ENCODE measurements at regions of chr2 and their contacts with region 1.

Region 1: GRCh38 chr2:74587664-74588277 is 33.3 kb downstream of the DOK1 start:
- DNase-seq: peak; percentile 77 to 88 (median 84)
- H3K4me3 ChIP-seq: no peak overlapping the region
- H3K27ac ChIP-seq: no peak overlapping the region
- H3K4me1 ChIP-seq: peaks cover 17 to 48% (median 26%) of the 10 kb centered on the region in 4 experiments
- H3K27me3 ChIP-seq: no peaks in the 10 kb centered on the region

Region 2: GRCh38 chr2:73588177-73588576 is 999.6 kb before region 1 on chr2:
- CTCF ChIA-PET with region 1: no interaction called
- POLR2A ChIA-PET with region 1: no interaction called
- DNase-seq: no peak
- H3K4me3 ChIP-seq: no peak overlapping the region
- H3K27ac ChIP-seq: no peak overlapping the region
- H3K4me1 ChIP-seq: no peaks in the 10 kb centered on the region
- H3K27me3 ChIP-seq: no peaks in the 10 kb centered on the region

Region 3: GRCh38 chr2:73984203-73984921 is 603.4 kb before region 1 on chr2 and contains the start of gene TET3:
- CTCF ChIA-PET with region 1: no interaction called
- POLR2A ChIA-PET with region 1: no interaction called
- DNase-seq: no peak
- H3K4me3 ChIP-seq: peak within 1 kb of the TSS; percentile 36 to 80 (median 73)
- H3K27ac ChIP-seq: peak within 1 kb of the TSS in 1 of 2 experiments; percentile 74
- H3K4me1 ChIP-seq: peaks cover 27 to 84% (median 69%) of the 10 kb centered on the region in 4 experiments
- H3K27me3 ChIP-seq: no peaks in the 10 kb centered on the region

Region 4: DNA sequence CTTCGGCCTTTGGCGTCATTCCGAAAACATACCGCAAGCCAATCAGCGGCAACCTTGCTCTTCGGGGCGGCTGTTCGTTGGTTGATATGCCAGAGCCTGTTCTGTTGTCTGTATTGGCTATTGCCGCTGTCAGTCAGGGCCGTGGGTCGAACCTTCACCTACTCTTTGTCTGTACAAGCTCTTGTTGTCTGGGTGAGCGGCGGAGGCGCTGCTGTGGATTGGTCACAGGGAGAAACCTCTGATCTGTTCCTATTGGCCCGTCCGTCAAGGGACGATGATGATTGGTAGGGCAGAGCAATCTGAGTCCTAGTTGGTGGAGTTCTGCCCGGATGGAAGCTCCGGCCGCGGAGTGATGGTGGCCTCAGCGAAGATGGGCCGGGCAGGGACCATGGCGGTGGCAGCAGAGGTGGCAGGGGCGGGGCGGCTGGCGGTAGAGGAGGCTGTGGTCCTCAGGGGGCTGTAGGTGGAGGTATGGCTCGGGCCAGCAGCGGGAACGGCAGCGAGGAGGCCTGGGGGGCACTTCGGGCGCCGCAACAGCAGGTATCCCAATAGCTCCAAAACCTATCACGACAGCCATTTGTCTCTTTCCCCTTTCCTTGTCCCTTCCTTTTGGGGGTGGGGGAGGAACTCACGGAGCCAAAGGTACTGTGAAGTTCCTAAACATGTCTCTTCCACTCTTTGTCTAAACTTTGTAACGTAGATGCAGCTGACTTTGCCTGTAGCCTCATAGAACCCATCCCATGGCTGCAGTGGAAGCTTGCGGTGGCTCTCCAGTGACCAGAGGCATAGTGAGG is 129.4 kb before region 1 on chr2 and contains the start of gene WBP1:
- CTCF ChIA-PET with region 1: interaction called, 10 read pairs
- POLR2A ChIA-PET with region 1: interaction called, 4 read pairs
- DNase-seq: peak; percentile 100
- H3K4me3 ChIP-seq: peak within 1 kb of the TSS; percentile 49 to 98 (median 84)
- H3K27ac ChIP-seq: peak within 1 kb of the TSS; percentile 88 to 94
- H3K4me1 ChIP-seq: peaks cover 6 to 48% (median 33%) of the 10 kb centered on the region in 4 experiments
- H3K27me3 ChIP-seq: no peaks in the 10 kb centered on the region

Region 5: GRCh38 chr2:74482801-74483674 is 104.7 kb before region 1 on chr2 and contains the starts of genes CCDC142 and TTC31:
- CTCF ChIA-PET with region 1: interaction called, 75 read pairs
- POLR2A ChIA-PET with region 1: no interaction called
- DNase-seq: peak; percentile 94 to 96 (median 96)
- H3K4me3 ChIP-seq: peak within 1 kb of the TSS; percentile 88 to 100 (median 94)
- H3K27ac ChIP-seq: peak within 1 kb of the TSS; percentile 61 to 81
- H3K4me1 ChIP-seq: peaks cover 4 to 27% (median 23%) of the 10 kb centered on the region in 4 experiments
- H3K27me3 ChIP-seq: no peaks in the 10 kb centered on the region

Region 6: GRCh38 chr2:74498500-74499266 is 89.1 kb before region 1 on chr2:
- CTCF ChIA-PET with region 1: interaction called, 93 read pairs
- POLR2A ChIA-PET with region 1: no interaction called
- DNase-seq: peak in 2 of 3 donors; percentile 48 to 55
- H3K4me3 ChIP-seq: peak overlapping the region; percentile 17 to 73 (median 58)
- H3K27ac ChIP-seq: no peak overlapping the region
- H3K4me1 ChIP-seq: peaks cover 4 to 43% (median 40%) of the 10 kb centered on the region in 4 experiments
- H3K27me3 ChIP-seq: peaks cover 0 to 77% (median 53%) of the 10 kb centered on the region in 5 experiments

Region 7: DNA sequence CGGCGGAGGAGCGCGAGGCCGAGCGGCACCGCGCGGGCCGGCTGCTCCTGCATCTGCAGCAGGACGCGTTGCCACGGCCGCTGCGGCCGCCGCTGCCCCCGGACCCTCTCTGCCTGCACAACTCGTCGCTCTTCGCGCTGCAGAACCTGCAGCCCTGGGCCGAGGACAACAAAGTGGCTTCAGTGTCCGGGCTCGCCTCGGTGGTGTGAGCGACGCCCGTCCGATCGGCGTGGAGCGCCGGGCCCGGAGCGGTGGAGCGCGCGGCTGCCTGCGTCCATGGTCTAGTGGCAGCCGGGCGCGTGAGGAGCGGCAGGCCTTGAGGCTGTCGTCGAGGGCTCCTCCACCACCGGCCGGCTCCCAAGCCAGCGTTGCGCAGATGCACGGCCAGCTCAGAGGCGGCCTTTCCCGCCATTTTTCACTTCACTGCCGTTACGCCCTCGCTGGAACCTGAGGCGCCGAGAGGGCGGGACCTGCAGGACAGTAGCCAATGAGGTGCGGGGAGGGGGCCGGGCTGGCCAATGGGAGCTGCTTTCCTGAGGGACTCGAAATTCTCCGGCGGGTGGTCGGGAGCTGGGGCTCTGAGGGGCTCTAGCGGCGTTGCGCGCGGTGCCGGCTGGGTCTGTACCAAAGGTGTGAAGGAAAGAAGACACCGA is 71.7 kb before region 1 on chr2:
- CTCF ChIA-PET with region 1: interaction called, 14 read pairs
- POLR2A ChIA-PET with region 1: no interaction called
- DNase-seq: peak in 2 of 3 donors; percentile 70 to 73
- H3K4me3 ChIP-seq: peak overlapping the region in 6 of 7 experiments; percentile 26 to 64 (median 52)
- H3K27ac ChIP-seq: no peak overlapping the region
- H3K4me1 ChIP-seq: peaks cover 0 to 38% (median 30%) of the 10 kb centered on the region in 4 experiments
- H3K27me3 ChIP-seq: peaks cover 13 to 95% (median 56%) of the 10 kb centered on the region in 5 experiments

Region 8: GRCh38 chr2:74548900-74549826 is 38.6 kb before region 1 on chr2:
- CTCF ChIA-PET with region 1: interaction called, 22 read pairs
- POLR2A ChIA-PET with region 1: no interaction called
- DNase-seq: peak in 1 of 3 donors; percentile 37
- H3K4me3 ChIP-seq: peak overlapping the region; percentile 67 to 89 (median 76)
- H3K27ac ChIP-seq: peak overlapping the region in 1 of 2 experiments; percentile 59
- H3K4me1 ChIP-seq: peaks cover 6 to 57% (median 41%) of the 10 kb centered on the region in 4 experiments
- H3K27me3 ChIP-seq: no peaks in the 10 kb centered on the region

Region 9: GRCh38 chr2:74573747-74574562 is 13.8 kb before region 1 on chr2:
- CTCF ChIA-PET with region 1: interaction called, 109 read pairs
- POLR2A ChIA-PET with region 1: interaction called, 4 read pairs
- DNase-seq: peak; percentile 58 to 70 (median 59)
- H3K4me3 ChIP-seq: peak overlapping the region in 4 of 7 experiments; percentile 40 to 52 (median 50)
- H3K27ac ChIP-seq: peak overlapping the region in 1 of 2 experiments; percentile 32
- H3K4me1 ChIP-seq: peaks cover 44 to 89% (median 60%) of the 10 kb centered on the region in 4 experiments
- H3K27me3 ChIP-seq: no peaks in the 10 kb centered on the region

Measured in common myeloid progenitor, CD34-positive (primary cell).